ENCODE measurements at regions of chr9 and their contacts with region 1.

Region 1: GRCh38 chr9:124551472-124552272 is 44.5 kb upstream of the NR5A1 start:
- DNase-seq: peak; percentile 66
- H3K4me3 ChIP-seq: peak overlapping the region in 1 of 2 experiments; percentile 13; a peak in 1 of 4 replicates
- H3K27ac ChIP-seq: peak overlapping the region in 1 of 2 experiments; percentile 33; a peak in 2 of 4 replicates
- H3K4me1 ChIP-seq: peaks cover 3 to 5% of the 10 kb centered on the region in 2 experiments; a peak in 2 of 4 replicates
- H3K27me3 ChIP-seq: no peaks in the 10 kb centered on the region
- CTCF ChIP-seq: peak; percentile 88
- EP300 ChIP-seq: no peak
- RAD21 ChIP-seq: peak; percentile 87

Region 2: DNA sequence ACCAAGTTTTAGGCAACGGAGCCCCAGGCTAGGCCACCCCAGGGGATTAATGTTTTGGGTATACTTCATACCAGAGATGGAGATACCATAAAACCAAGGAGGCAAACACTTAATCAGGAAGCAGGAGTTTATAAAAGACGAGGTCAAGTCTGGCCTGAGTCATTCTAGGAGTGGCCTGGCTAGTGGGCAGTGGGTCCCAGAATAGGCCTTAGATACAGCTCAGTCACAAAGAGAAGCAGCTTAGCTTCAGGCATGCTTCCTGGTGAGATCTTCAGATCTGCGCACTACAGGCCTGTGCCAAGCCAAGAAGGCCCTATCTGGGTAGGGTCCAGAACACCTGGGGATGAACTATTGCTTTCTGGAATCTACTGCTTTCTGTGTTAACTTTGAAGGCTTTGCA is 23.9 kb before region 1 on chr9:
- CTCF ChIA-PET with region 1: interaction called, 10 read pairs
- POLR2A ChIA-PET with region 1: no interaction called
- DNase-seq: no peak
- H3K4me3 ChIP-seq: no peak overlapping the region
- H3K27ac ChIP-seq: no peak overlapping the region
- H3K4me1 ChIP-seq: peaks cover 0 to 30% of the 10 kb centered on the region in 2 experiments; a peak in 1 of 4 replicates
- H3K27me3 ChIP-seq: no peaks in the 10 kb centered on the region
- CTCF ChIP-seq: no peak
- EP300 ChIP-seq: no peak
- RAD21 ChIP-seq: no peak

Region 3: GRCh38 chr9:124562328-124562727 is 10.7 kb after region 1 on chr9:
- CTCF ChIA-PET with region 1: interaction called, 12 read pairs
- POLR2A ChIA-PET with region 1: no interaction called
- DNase-seq: no peak
- H3K4me3 ChIP-seq: no peak overlapping the region
- H3K27ac ChIP-seq: no peak overlapping the region
- H3K4me1 ChIP-seq: no peaks in the 10 kb centered on the region
- H3K27me3 ChIP-seq: no peaks in the 10 kb centered on the region
- CTCF ChIP-seq: no peak
- EP300 ChIP-seq: no peak
- RAD21 ChIP-seq: no peak

Region 4: GRCh38 chr9:124658165-124659017 is 106.7 kb after region 1 on chr9:
- CTCF ChIA-PET with region 1: interaction called, 15 read pairs
- POLR2A ChIA-PET with region 1: no interaction called
- DNase-seq: peak; percentile 76
- H3K4me3 ChIP-seq: peak overlapping the region; percentile 83 to 85
- H3K27ac ChIP-seq: peak overlapping the region; percentile 97 to 100
- H3K4me1 ChIP-seq: peaks cover 30% of the 10 kb centered on the region in 2 experiments; a peak in 3 of 4 replicates
- H3K27me3 ChIP-seq: no peaks in the 10 kb centered on the region
- CTCF ChIP-seq: no peak
- EP300 ChIP-seq: no peak
- RAD21 ChIP-seq: no peak

Region 5: DNA sequence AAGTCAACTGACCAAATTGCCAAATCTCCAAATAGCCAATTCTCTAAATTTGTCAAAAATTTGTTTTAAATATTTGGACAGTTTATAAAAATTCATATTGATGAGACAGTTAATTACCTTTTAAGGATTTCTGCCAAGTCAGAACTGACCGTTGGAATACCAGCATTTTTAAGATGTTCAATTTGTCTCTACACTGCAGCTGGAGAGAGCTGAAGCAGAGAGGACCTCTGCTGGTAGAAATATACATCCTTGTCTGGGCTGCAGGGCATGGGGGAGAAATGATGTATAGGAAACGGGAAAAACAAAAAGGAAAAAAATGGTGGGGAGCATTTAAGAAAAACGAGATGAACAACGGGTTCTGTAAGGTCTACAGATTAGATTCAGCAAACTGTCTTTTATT is 202.6 kb after region 1 on chr9:
- CTCF ChIA-PET with region 1: interaction called, 11 read pairs
- POLR2A ChIA-PET with region 1: no interaction called
- DNase-seq: peak; percentile 31
- H3K4me3 ChIP-seq: no peak overlapping the region
- H3K27ac ChIP-seq: peak overlapping the region in 1 of 2 experiments; percentile 78; a peak in 2 of 4 replicates
- H3K4me1 ChIP-seq: peaks cover 7 to 56% of the 10 kb centered on the region in 2 experiments
- H3K27me3 ChIP-seq: no peaks in the 10 kb centered on the region
- CTCF ChIP-seq: peak; percentile 74
- EP300 ChIP-seq: no peak
- RAD21 ChIP-seq: peak; percentile 72

Region 6: GRCh38 chr9:124764774-124765438 is 213.2 kb after region 1 on chr9:
- CTCF ChIA-PET with region 1: interaction called, 25 read pairs
- POLR2A ChIA-PET with region 1: no interaction called
- DNase-seq: no peak
- H3K4me3 ChIP-seq: no peak overlapping the region
- H3K27ac ChIP-seq: no peak overlapping the region
- H3K4me1 ChIP-seq: peaks cover 8 to 16% of the 10 kb centered on the region in 2 experiments; a peak in 3 of 4 replicates
- H3K27me3 ChIP-seq: no peaks in the 10 kb centered on the region
- CTCF ChIP-seq: peak; percentile 56
- EP300 ChIP-seq: no peak
- RAD21 ChIP-seq: peak; percentile 65